Mammary epithelial cell (primary cell): ENCODE measurements at regions of chr5 and their contacts with region 1.

Region 1: GRCh38 chr5:163408311-163408923 is 29.0 kb upstream of the CCNG1 start:
- DNase-seq: peak; percentile 41
- H3K4me3 ChIP-seq: no peak overlapping the region
- H3K27ac ChIP-seq: no peak overlapping the region
- H3K4me1 ChIP-seq: peaks cover 5% of the 10 kb centered on the region
- H3K27me3 ChIP-seq: no peaks in the 10 kb centered on the region
- CTCF ChIP-seq: peak; percentile 72 to 89

Region 2: DNA sequence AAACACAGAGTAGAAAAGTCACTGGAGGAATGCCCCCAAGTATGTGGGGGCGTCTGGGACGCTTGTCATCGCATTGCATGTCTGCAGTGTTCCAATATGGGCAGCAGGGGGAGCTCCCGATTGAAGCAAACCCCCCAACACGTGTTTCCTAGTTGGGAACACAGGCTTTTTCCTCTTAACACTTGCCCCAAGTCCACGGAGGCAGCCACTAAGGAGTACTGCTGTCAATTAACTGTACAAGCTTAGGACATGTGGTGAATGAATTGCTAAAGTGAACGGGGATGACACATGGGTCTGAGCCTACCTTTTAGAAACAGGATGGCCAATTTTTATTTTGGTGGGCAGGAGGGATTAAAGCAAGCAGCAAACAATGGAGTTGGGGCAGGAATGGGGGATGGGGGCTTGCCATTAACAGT is 1864.1 kb before region 1 on chr5:
- CTCF ChIA-PET with region 1: interaction called, 3 read pairs
- dilution Hi-C with region 1: no loop called
- in situ Hi-C with region 1: no loop called
- intact Hi-C with region 1: loop called (anchors 1 kb)
- DNase-seq: peak; percentile 5
- H3K4me3 ChIP-seq: no peak overlapping the region
- H3K27ac ChIP-seq: no peak overlapping the region
- H3K4me1 ChIP-seq: peaks cover 4% of the 10 kb centered on the region
- H3K27me3 ChIP-seq: peaks cover 26% of the 10 kb centered on the region
- CTCF ChIP-seq: peak; percentile 79 to 87

Region 3: DNA sequence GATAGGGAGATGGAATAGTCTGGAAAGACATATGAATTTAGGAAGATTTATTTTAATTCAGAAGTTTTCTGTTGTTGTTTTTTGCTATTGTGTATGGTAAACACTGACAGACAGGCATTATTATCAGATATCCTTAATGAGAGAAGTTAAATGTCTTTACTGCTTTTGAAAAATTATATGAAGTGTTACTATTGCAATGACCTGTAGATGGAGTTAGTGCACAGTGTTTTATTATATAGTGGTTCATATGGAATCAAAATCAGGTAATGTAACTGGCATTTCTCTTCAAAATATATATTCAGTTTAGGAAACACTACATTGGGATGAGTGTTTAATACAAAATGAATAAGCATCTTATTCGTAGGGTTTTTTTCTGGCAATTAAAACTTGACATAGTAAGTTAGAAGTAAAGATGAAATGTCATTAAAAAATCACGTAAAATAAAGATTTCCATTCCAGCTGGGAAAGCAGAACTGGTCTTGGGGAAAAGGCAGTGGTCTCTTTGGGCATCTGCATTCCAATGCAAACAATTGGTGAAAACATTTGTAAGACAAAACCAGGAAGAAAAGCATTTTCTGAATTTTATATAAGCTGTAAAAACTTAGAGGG is 1556.6 kb before region 1 on chr5:
- CTCF ChIA-PET with region 1: no interaction called
- dilution Hi-C with region 1: no loop called
- in situ Hi-C with region 1: no loop called
- intact Hi-C with region 1: loop called (anchors 2 kb)
- DNase-seq: no peak
- H3K4me3 ChIP-seq: no peak overlapping the region
- H3K27ac ChIP-seq: no peak overlapping the region
- H3K4me1 ChIP-seq: no peaks in the 10 kb centered on the region
- H3K27me3 ChIP-seq: peaks cover 8% of the 10 kb centered on the region
- CTCF ChIP-seq: peak in 1 of 2 donors; percentile 45

Region 4: GRCh38 chr5:163079618-163080017 is 328.8 kb before region 1 on chr5:
- CTCF ChIA-PET with region 1: no interaction called
- dilution Hi-C with region 1: no loop called
- in situ Hi-C with region 1: no loop called
- intact Hi-C with region 1: loop called (anchors 5 kb)
- DNase-seq: no peak
- H3K4me3 ChIP-seq: no peak overlapping the region
- H3K27ac ChIP-seq: no peak overlapping the region
- H3K4me1 ChIP-seq: no peaks in the 10 kb centered on the region
- H3K27me3 ChIP-seq: no peaks in the 10 kb centered on the region
- CTCF ChIP-seq: peak; percentile 26 to 52

Region 5: GRCh38 chr5:163189023-163189553 is 219.3 kb before region 1 on chr5:
- CTCF ChIA-PET with region 1: no interaction called
- dilution Hi-C with region 1: no loop called
- in situ Hi-C with region 1: no loop called
- intact Hi-C with region 1: no loop called
- DNase-seq: no peak
- H3K4me3 ChIP-seq: no peak overlapping the region
- H3K27ac ChIP-seq: no peak overlapping the region
- H3K4me1 ChIP-seq: no peaks in the 10 kb centered on the region
- H3K27me3 ChIP-seq: no peaks in the 10 kb centered on the region
- CTCF ChIP-seq: no peak

Region 6: GRCh38 chr5:163306421-163306820 is 102.0 kb before region 1 on chr5:
- CTCF ChIA-PET with region 1: interaction called, 5 read pairs
- dilution Hi-C with region 1: no loop called
- in situ Hi-C with region 1: loop called in 1 of 2 experiments (anchors 25 kb)
- intact Hi-C with region 1: loop called (anchors 1 kb)
- DNase-seq: peak; percentile 9
- H3K4me3 ChIP-seq: no peak overlapping the region
- H3K27ac ChIP-seq: no peak overlapping the region
- H3K4me1 ChIP-seq: no peaks in the 10 kb centered on the region
- H3K27me3 ChIP-seq: no peaks in the 10 kb centered on the region
- CTCF ChIP-seq: peak; percentile 41 to 56

Region 7: GRCh38 chr5:163330723-163331668 is 77.4 kb before region 1 on chr5:
- CTCF ChIA-PET with region 1: no interaction called
- dilution Hi-C with region 1: no loop called
- in situ Hi-C with region 1: no loop called
- intact Hi-C with region 1: no loop called
- DNase-seq: no peak
- H3K4me3 ChIP-seq: no peak overlapping the region
- H3K27ac ChIP-seq: no peak overlapping the region
- H3K4me1 ChIP-seq: no peaks in the 10 kb centered on the region
- H3K27me3 ChIP-seq: no peaks in the 10 kb centered on the region
- CTCF ChIP-seq: no peak

Region 8: DNA sequence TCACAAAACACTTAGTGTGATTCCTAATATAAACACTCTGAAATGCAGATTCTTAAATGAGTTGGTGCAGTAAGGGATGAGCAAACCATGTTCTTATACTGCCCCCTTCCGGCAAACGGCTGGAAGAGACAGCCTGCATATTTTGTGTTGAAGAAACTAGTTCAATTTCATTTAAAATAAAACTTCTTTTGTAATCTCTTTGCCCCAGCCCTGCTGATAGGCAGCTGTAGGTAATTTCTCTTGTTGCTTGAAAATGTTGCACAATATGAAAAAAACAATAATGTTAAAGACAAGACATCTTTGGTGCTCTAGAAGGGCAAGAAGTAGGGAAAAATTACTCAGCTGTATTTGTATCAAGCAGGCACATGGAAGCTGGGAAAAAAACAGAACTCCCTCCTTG is 60.7 kb before region 1 on chr5:
- CTCF ChIA-PET with region 1: no interaction called
- dilution Hi-C with region 1: no loop called
- in situ Hi-C with region 1: no loop called
- intact Hi-C with region 1: loop called (anchors 5 kb)
- DNase-seq: peak; percentile 32
- H3K4me3 ChIP-seq: no peak overlapping the region
- H3K27ac ChIP-seq: no peak overlapping the region
- H3K4me1 ChIP-seq: no peaks in the 10 kb centered on the region
- H3K27me3 ChIP-seq: no peaks in the 10 kb centered on the region
- CTCF ChIP-seq: peak; percentile 77 to 83

Region 9: DNA sequence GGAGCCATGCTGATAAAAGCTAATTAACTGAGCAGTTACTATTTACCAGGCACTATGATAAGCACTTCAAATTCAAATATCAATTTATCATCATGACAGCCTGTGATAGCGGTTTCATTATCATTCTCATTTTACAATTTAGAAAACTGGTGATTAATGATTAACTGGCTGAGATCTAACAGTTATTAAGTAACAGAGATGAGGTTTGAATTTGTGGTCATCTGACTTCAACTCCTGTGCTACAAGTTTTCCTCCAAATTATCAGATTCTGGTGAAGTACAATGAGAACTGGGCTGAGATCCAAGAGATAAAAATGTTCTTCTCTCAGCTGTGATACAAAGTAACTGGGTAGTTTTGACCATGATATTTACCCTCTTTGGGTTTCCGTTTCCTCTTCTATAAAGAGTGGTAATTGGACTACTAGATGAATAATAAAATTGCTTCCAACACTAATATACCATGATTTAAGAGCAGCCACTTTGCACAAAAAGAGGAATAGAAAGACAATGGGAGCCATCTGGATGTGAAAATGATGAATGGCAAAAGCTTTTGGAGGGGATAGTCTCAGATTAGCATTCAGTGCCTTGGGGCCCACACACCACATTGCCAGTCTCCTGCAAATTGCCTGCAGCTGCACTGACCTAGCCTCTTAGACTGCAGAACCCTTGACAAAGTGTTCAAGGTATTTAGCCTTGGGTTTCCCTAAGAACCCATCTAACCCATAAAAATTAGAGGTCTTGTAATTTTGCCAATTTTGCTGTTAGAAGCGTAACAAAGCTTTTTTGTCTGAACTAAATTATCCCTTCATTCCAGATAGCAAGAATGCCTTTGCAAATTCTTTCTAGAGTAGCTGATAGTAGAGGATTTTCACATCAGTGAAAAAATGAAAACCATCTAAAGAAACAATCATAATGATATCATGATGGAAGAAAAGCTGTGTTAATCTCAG is 45.3 kb before region 1 on chr5:
- CTCF ChIA-PET with region 1: no interaction called
- dilution Hi-C with region 1: no loop called
- in situ Hi-C with region 1: no loop called
- intact Hi-C with region 1: no loop called
- DNase-seq: no peak
- H3K4me3 ChIP-seq: no peak overlapping the region
- H3K27ac ChIP-seq: no peak overlapping the region
- H3K4me1 ChIP-seq: no peaks in the 10 kb centered on the region
- H3K27me3 ChIP-seq: no peaks in the 10 kb centered on the region
- CTCF ChIP-seq: no peak

Region 10: GRCh38 chr5:163727028-163727427 is 318.6 kb after region 1 on chr5:
- CTCF ChIA-PET with region 1: no interaction called
- dilution Hi-C with region 1: no loop called
- in situ Hi-C with region 1: no loop called
- intact Hi-C with region 1: no loop called
- DNase-seq: no peak
- H3K4me3 ChIP-seq: no peak overlapping the region
- H3K27ac ChIP-seq: no peak overlapping the region
- H3K4me1 ChIP-seq: no peaks in the 10 kb centered on the region
- H3K27me3 ChIP-seq: peaks cover 3% of the 10 kb centered on the region
- CTCF ChIP-seq: no peak